ENCODE measurements at regions of chr1 and their contacts with region 1.

Region 1: GRCh38 chr1:247431643-247432042 is 15.7 kb downstream of the NLRP3 start:
- DNase-seq: no peak
- ATAC-seq: no peak
- H3K4me3 ChIP-seq: no peak overlapping the region
- H3K4me3 Mint-ChIP-seq: no peak overlapping the region
- H3K27ac ChIP-seq: no peak overlapping the region
- H3K27ac Mint-ChIP-seq: no peak overlapping the region
- H3K4me1 ChIP-seq: peaks cover 0 to 1% of the 10 kb centered on the region in 2 experiments
- H3K4me1 Mint-ChIP-seq: peaks cover 0 to 5% (median under 1%) of the 10 kb centered on the region in 3 donors
- H3K27me3 ChIP-seq: no peaks in the 10 kb centered on the region
- H3K27me3 Mint-ChIP-seq: no peaks in the 10 kb centered on the region

Region 2: GRCh38 chr1:247448107-247448791 is 16.6 kb after region 1 on chr1:
- CTCF ChIA-PET with region 1: no interaction called
- POLR2A ChIA-PET with region 1: interaction called in 1 of 2 experiments, 11 read pairs
- DNase-seq: peak in 20 of 35 experiments; percentile 4 to 56 (median 18)
- ATAC-seq: peak in 3 of 4 experiments; percentile 43 to 65 (median 55)
- H3K4me3 ChIP-seq: no peak overlapping the region
- H3K4me3 Mint-ChIP-seq: peak overlapping the region in 2 of 3 donors; percentile 43 to 63
- H3K27ac ChIP-seq: no peak overlapping the region
- H3K27ac Mint-ChIP-seq: no peak overlapping the region
- H3K4me1 ChIP-seq: no peaks in the 10 kb centered on the region
- H3K4me1 Mint-ChIP-seq: peaks cover 0 to 10% (median 9%) of the 10 kb centered on the region in 3 donors
- H3K27me3 ChIP-seq: no peaks in the 10 kb centered on the region
- H3K27me3 Mint-ChIP-seq: no peaks in the 10 kb centered on the region

Measured in T-cell (primary cell).